ENCODE measurements at regions of chr11 and their contacts with region 1.

Region 1: GRCh38 chr11:43944761-43945311 is 2.4 kb downstream of the C11orf96 start:
- DNase-seq: peak; percentile 77
- H3K4me3 Mint-ChIP-seq: peak overlapping the region; percentile 81
- H3K27ac Mint-ChIP-seq: no peak overlapping the region
- H3K4me1 Mint-ChIP-seq: peaks cover 20% of the 10 kb centered on the region
- H3K27me3 Mint-ChIP-seq: peaks cover 59% of the 10 kb centered on the region

Region 2: DNA sequence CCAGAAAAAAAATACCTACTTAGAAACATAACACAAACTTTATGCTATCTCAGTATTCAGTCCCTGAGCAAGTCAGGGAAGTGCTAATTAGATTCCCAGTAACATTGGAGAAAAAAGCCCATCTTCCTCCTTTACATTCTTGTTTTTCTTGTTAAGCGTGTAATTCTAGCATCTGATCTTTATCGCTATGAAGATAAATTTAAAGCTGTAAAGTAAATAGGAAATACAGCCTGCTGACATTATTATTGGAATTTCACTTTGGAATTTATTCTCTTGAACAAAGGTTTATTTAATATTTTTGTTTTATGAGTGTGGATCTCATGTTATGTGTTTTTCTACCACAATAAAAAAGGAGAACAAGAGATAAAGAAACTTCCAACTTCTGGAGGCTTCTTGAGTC is 50.3 kb before region 1 on chr11:
- CTCF ChIA-PET with region 1: interaction called, 12 read pairs
- POLR2A ChIA-PET with region 1: no interaction called
- DNase-seq: no peak
- H3K4me3 Mint-ChIP-seq: no peak overlapping the region
- H3K27ac Mint-ChIP-seq: no peak overlapping the region
- H3K4me1 Mint-ChIP-seq: peaks cover 2% of the 10 kb centered on the region
- H3K27me3 Mint-ChIP-seq: no peaks in the 10 kb centered on the region